Mammary epithelial cell (primary cell): ENCODE measurements at regions of chr5 and their contacts with region 1.

Region 1: DNA sequence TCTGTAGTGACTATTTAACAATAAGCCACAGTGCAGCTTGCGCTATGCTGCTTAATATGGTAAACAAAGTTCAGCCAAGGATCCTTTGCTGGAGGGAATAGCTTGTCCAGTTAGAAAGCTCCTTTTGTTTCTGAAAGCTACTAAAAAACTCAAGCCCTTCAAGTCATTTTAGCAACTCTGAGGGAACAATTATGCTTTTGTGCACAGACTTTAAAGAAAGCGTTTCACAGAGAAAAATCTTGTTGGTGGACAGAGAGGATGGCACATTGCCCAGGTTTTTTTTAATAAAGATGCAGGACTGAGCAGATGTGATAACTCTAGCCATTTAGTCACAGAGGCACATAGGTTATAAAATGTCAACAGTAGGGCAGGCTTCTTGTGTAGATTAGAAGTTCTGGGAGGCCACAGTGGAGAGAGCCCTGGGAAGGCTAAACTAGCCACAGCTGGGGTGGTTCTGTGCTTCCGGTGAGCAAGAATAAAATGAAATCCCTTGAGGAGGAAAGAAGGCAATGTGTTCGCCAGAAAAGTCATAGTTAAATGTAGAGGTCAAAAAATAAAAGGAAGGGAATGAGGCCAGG is 63.4 kb downstream of the ALDH7A1 start:
- DNase-seq: peak; percentile 32
- H3K4me3 ChIP-seq: no peak overlapping the region
- H3K27ac ChIP-seq: no peak overlapping the region
- H3K4me1 ChIP-seq: peaks cover 18% of the 10 kb centered on the region
- H3K27me3 ChIP-seq: no peaks in the 10 kb centered on the region
- CTCF ChIP-seq: no peak

Region 2: DNA sequence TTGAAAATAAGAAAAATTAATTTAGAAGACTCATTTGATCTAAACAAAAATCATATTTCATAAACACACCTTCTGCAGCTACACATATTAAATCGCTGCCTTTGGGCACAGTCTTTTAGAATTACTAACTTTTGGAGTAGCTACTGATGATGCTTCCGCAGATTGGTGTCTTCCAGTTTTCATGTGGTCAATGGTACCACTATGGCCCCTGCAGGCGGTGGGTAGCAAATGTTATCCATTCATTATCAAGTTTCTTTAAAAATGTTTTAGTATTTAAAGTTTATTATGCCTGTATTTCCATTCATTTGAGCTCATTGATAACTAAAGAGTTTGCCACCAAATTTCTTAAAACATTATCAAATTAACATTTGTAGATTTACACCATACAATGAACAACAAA is 231.3 kb before region 1 on chr5:
- CTCF ChIA-PET with region 1: no interaction called
- dilution Hi-C with region 1: no loop called
- in situ Hi-C with region 1: no loop called
- intact Hi-C with region 1: no loop called
- DNase-seq: no peak
- H3K4me3 ChIP-seq: no peak overlapping the region
- H3K27ac ChIP-seq: no peak overlapping the region
- H3K4me1 ChIP-seq: no peaks in the 10 kb centered on the region
- H3K27me3 ChIP-seq: no peaks in the 10 kb centered on the region
- CTCF ChIP-seq: no peak

Region 3: DNA sequence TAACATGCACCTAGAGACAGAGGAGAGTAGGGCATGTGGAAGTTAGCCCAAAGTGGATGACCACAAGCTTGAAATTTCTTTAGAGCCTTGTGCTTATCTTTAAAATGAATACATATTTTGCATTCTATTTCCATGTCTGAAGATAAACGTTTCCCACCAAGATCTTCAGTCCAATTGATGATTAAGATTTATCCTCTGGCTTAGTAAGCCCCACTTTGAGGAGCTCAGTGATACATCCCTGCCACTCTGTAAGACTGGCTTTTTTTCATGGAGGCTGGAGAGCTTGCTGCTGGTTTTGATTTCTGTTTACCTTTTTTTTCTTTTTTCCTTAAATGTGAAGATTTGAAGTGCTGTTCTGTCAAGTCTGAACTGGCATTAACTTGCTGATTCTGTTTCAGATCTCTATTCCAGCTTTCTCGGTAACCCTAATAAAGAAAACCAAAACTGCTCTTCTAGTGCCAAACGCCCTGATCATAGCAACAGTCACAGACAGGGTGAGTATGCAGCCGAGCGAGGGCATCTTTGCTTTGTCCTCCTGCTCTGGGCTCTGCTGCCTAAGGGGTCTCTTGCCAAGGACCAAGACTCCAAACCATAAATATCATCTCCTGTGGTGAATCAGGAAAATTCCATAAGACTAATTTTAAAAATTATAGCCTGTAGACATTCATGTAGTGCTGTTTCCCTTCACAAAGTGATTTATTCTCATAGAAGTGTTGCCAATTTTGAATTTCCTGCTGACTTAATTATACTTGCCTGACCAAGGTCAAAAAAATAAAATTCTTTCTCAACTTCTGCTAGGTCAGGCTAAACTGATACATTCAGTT is 54.1 kb before region 1 on chr5:
- CTCF ChIA-PET with region 1: no interaction called
- dilution Hi-C with region 1: loop called (anchors 5 kb)
- in situ Hi-C with region 1: no loop called
- intact Hi-C with region 1: loop called (anchors 5 kb)
- DNase-seq: no peak
- H3K4me3 ChIP-seq: no peak overlapping the region
- H3K27ac ChIP-seq: peak overlapping the region; percentile 23
- H3K4me1 ChIP-seq: peaks cover 5% of the 10 kb centered on the region
- H3K27me3 ChIP-seq: no peaks in the 10 kb centered on the region
- CTCF ChIP-seq: no peak

Region 4: DNA sequence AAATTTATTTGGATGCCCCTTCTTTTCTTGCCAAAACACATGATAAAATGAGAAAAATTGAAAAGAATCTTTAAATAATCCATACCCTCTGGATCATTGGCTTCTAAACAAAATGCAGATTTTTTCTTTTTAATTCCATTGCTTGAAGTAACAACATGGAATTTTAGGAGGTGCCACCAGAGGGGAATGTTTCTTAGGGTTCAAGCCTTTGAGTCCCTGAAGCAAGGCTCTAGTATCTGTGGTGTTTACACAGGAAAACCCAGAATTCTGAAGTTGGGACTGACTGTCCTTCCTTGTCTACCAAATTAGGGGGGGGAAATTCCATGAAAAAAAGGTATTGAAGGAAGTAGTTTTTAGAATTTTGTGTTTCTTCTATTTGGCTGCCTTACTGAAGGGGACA is 314.7 kb after region 1 on chr5:
- CTCF ChIA-PET with region 1: no interaction called
- dilution Hi-C with region 1: no loop called
- in situ Hi-C with region 1: no loop called
- intact Hi-C with region 1: no loop called
- DNase-seq: no peak
- H3K4me3 ChIP-seq: no peak overlapping the region
- H3K27ac ChIP-seq: no peak overlapping the region
- H3K4me1 ChIP-seq: no peaks in the 10 kb centered on the region
- H3K27me3 ChIP-seq: no peaks in the 10 kb centered on the region
- CTCF ChIP-seq: peak in 1 of 2 donors; percentile 27